ENCODE measurements at regions of chr17 and their contacts with region 1.

Region 1: DNA sequence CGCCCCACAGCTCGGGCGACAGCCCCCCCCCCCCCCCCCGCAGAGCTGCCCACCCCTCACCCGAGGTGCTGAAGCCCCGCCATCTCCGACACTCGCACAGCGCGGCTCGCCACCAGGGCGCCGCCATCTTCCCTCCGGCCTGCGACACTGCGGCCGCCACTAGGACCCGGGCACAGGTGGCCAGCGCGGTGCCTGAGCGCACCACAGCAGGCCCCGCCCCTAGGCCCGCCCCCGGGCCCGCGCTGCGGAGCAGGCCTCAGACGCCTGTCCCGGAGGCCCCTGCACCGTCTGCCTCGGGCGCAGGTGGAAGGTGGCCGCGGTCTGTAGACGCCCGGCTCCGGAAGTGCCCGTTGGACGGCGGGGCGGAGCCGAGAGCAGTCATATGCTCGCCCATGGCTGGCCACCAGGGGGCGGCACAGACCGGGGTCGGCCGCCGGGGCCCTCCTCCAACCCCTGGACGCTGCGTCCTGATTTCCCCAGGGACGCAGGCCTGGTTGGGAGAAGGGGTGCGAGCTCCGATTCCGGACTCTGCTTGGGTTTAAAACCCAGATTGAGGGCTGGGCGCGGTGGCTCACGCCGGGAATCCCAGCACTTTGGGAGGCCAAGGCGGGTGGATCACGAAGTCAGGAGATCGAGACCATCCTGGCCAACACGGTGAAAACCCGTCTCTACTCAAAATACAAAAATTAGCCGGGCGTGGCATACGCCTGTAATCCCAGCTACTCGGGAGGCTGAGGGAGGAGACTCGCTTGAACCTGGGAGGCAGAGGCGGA is at the start of gene MRPL38:
- DNase-seq: peak; percentile 94
- ATAC-seq: peak; percentile 93
- total RNA-seq, gene MRPL38: 84.2 to 111 TPM

Region 2: DNA sequence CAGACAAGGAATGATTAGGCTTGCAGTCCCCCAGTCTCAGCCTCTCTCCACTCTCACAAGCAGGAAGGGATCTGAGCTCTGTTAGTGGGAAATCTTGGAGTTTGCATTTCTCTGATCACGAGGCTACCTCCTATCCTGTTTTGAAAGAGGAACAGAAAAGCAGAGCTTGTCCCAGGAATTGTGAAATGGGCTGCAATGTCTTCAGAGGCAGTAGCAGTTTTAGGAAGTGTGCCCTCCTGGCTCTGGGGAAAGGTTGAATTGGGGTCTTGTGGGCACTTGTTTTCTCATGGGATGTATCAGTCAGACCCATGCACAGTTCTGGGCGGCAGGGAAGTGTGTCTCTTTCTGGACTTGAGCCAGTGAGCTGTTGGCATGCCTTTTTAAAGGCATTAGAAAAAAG is 676.6 kb before region 1 on chr17:
- intact Hi-C with region 1: no loop called
- DNase-seq: no peak
- ATAC-seq: peak; percentile 68

Region 3: GRCh38 chr17:75843561-75844529 is 61.1 kb before region 1 on chr17 and contains the start of gene UNC13D:
- intact Hi-C with region 1: no loop called
- DNase-seq: peak in 1 of 2 donors; percentile 66
- ATAC-seq: peak; percentile 8
- total RNA-seq, gene UNC13D: 20.5 to 31.0 TPM

Region 4: GRCh38 chr17:76000016-76000754 is 95.2 kb after region 1 on chr17:
- intact Hi-C with region 1: loop called in 1 of 2 experiments (anchors 5 kb)
- DNase-seq: peak; percentile 59 to 80
- ATAC-seq: peak; percentile 32